MCF 10A (cell line): ENCODE measurements at regions of chr5 and their contacts with region 1.

Region 1: DNA sequence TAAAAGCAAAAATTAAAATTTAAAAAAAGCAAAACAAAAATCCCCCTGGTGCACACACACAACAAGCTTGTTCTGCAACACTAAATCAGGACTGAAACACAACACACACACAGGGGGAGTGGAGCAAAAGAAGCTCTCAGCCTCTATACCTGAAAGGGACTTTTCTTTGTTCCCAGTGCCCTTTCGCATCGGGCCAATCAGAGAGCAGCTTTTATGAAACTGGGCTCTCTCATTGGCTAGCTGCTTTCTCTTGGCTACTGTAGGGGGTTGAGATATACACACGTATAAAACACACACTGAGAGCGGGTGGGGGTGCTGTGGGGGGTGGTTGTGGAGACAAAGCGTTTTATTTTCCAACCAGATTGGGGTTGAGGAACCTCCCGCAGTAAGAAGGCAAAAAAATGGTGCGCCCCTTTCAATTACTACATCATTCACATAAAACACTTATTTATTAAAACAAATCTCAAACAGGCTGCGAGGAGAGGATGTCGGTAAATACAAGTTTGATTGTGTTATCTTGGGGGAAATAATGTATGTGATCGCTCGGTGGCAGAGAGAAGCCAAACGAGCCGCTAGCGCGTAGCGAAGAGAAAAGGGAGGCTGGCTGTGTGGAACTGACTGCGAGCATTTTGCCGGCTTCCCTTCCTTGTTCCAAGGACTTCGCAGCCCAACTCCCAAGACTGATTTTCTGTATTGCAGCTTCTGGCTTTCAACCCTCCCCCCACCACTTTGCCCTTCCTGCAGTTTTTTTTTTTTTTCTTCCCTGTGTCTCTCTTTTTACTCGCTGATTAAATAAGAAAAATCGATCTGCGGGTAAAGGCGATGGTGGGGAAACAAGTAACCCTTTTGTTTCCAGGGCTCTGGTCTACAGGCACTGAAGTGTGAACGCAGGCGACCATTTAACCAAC is 2.5 kb upstream of the ZNF608 start:
- DNase-seq: peak; percentile 97
- H3K4me3 Mint-ChIP-seq: no peak overlapping the region
- H3K27ac Mint-ChIP-seq: no peak overlapping the region
- H3K4me1 Mint-ChIP-seq: peaks cover 12% of the 10 kb centered on the region
- H3K27me3 Mint-ChIP-seq: no peaks in the 10 kb centered on the region
- CTCF ChIP-seq: no peak

Region 2: GRCh38 chr5:124315741-124316415 is 433.1 kb before region 1 on chr5:
- CTCF ChIA-PET with region 1: interaction called, 3 read pairs
- POLR2A ChIA-PET with region 1: no interaction called
- intact Hi-C with region 1: loop called (anchors 10 kb)
- DNase-seq: peak; percentile 83
- H3K4me3 Mint-ChIP-seq: no peak overlapping the region
- H3K27ac Mint-ChIP-seq: no peak overlapping the region
- H3K4me1 Mint-ChIP-seq: peaks cover 7% of the 10 kb centered on the region
- H3K27me3 Mint-ChIP-seq: no peaks in the 10 kb centered on the region
- CTCF ChIP-seq: no peak

Region 3: DNA sequence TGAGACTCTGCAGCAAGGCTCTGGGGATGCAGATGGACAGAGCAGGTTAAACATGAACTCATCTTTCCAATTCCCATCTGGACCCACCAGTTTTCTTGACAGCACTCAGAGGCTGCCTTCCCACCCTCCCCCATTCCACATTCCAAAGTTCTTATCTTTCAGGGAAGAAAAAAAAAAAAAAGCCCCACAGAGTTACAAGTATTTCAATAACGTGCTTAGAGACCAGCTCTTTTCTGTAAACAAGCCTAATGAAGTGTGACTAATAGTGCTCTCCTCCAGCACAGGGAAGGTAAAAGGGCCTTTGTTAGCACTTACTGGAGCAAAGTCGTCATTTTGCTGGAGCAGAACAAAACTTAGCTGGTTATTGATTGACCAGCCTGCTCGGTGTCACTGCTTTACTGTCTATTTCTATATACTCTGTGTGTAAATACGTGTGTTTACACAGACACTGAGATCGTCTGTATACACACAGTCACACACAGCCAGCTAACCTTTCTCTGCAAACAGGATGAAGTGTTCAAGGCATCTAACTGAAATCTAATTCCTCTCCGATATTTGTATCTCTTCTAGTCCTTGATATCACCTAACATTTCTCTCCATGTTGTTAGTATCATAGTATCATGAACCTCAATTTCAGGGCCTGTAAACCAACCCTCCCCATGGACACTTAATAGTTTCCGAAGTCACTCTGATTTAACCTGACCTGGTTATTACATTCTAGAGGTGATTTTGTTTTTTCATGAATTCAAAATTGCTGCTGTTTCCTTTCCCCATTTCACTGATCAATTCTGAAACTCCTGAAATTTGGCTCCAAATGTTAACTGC is 87.4 kb before region 1 on chr5:
- CTCF ChIA-PET with region 1: interaction called, 3 read pairs
- POLR2A ChIA-PET with region 1: interaction called, 16 read pairs
- intact Hi-C with region 1: no loop called
- DNase-seq: peak; percentile 66
- H3K4me3 Mint-ChIP-seq: peak overlapping the region; percentile 47
- H3K27ac Mint-ChIP-seq: peak overlapping the region; percentile 95
- H3K4me1 Mint-ChIP-seq: peaks cover 48% of the 10 kb centered on the region
- H3K27me3 Mint-ChIP-seq: no peaks in the 10 kb centered on the region
- CTCF ChIP-seq: no peak

Region 4: GRCh38 chr5:124677374-124678351 is 71.3 kb before region 1 on chr5:
- CTCF ChIA-PET with region 1: no interaction called
- POLR2A ChIA-PET with region 1: no interaction called
- intact Hi-C with region 1: no loop called
- DNase-seq: no peak
- H3K4me3 Mint-ChIP-seq: no peak overlapping the region
- H3K27ac Mint-ChIP-seq: no peak overlapping the region
- H3K4me1 Mint-ChIP-seq: no peaks in the 10 kb centered on the region
- H3K27me3 Mint-ChIP-seq: no peaks in the 10 kb centered on the region
- CTCF ChIP-seq: no peak

Region 5: GRCh38 chr5:124824637-124825158 is 75.8 kb after region 1 on chr5:
- CTCF ChIA-PET with region 1: interaction called, 3 read pairs
- POLR2A ChIA-PET with region 1: interaction called, 103 read pairs
- intact Hi-C with region 1: no loop called
- DNase-seq: peak; percentile 96
- H3K4me3 Mint-ChIP-seq: peak overlapping the region; percentile 55
- H3K27ac Mint-ChIP-seq: peak overlapping the region; percentile 89
- H3K4me1 Mint-ChIP-seq: peaks cover 33% of the 10 kb centered on the region
- H3K27me3 Mint-ChIP-seq: no peaks in the 10 kb centered on the region
- CTCF ChIP-seq: no peak

Region 6: DNA sequence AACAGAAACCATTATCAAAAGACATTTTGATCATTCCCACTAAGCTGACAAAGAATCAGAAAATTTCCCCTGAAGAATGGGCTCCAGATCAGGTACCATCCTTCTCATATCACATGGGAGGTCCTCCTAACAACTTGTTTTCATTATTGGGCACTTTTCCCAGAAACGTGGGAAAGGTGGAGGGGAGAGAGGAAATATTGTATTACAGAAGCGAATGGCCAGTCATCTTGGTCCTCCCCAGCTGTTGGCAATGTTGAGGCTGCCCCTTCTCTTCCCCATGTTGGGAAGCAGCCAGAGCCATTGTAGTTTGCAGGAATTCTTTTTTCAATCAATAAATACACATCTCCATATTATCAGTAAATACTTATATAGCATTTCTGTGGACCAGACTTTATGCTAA is 123.7 kb after region 1 on chr5:
- CTCF ChIA-PET with region 1: no interaction called
- POLR2A ChIA-PET with region 1: no interaction called
- intact Hi-C with region 1: no loop called
- DNase-seq: peak; percentile 27
- H3K4me3 Mint-ChIP-seq: no peak overlapping the region
- H3K27ac Mint-ChIP-seq: no peak overlapping the region
- H3K4me1 Mint-ChIP-seq: no peaks in the 10 kb centered on the region
- H3K27me3 Mint-ChIP-seq: no peaks in the 10 kb centered on the region
- CTCF ChIP-seq: no peak

Region 7: DNA sequence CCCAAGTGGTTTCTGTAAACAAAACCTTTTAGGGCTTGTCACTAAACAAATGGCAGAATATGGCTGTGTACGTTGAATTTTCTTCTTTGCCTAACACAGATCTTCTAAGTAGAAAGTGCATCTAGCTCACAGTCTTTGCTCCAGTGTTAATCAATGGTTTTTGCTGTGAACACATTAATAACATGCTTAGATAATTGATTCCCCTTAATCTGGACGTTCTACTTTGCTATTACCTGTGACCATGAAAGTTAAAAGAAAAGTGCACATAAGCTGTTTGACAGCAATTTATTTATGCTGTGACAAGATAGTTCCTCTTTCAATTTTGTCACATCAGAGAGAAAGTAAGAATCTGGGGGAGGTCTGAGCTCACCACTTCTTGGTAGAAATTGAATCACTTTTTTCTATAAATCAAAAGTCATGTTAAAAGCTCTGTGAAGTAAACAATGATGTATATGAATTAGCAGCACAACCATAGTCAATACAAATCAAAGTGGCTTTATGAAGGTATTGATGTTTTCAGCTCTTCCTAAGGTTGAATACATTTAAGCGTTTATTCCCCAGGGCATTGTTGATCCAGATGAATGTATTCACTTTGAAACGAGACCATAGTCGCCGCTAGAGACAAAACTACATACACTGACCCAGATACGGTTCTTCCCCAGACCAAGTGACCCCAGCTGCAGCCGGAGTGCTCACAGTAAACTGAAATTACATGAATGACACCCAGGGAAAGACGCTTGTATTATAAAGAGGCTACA is 172.1 kb after region 1 on chr5:
- CTCF ChIA-PET with region 1: no interaction called
- POLR2A ChIA-PET with region 1: no interaction called
- intact Hi-C with region 1: no loop called
- DNase-seq: no peak
- H3K4me3 Mint-ChIP-seq: no peak overlapping the region
- H3K27ac Mint-ChIP-seq: no peak overlapping the region
- H3K4me1 Mint-ChIP-seq: no peaks in the 10 kb centered on the region
- H3K27me3 Mint-ChIP-seq: no peaks in the 10 kb centered on the region
- CTCF ChIP-seq: no peak

Region 8: DNA sequence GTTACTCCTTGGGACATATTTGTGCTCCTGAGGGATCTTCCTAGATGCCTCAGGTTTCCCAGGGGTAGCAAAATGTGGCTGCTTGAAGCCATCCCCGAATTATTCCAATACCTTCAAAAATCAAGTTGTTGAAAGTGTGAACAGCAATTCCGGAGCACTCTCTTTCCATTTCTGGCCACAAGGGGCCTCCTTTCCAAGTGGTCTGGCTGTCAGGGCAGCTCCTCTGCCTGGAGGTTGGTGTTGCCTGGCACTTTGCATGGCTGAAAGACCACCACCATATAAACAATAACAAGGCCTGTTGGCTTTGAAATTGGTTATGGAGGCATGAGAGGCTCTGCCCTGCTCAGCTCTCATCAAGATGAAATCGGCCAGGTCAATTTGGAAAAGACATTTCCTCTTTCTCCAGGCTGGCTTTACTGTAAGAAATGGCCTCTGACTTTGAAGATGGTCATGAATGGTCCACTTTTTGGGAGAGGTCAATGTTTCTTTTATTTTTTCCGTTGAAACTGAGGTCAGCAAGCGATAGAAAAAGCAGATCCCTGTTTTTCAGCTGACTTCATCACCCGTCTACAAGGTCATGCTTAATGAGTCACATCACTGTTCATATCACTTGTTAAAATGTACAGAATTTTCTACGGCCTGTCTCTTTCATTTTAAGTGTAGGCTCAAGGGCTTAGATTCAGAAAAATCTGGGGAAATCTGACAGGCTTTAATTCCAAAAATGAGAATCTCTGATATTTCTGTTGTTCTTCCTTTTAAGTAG is 478.6 kb after region 1 on chr5:
- CTCF ChIA-PET with region 1: no interaction called
- POLR2A ChIA-PET with region 1: no interaction called
- intact Hi-C with region 1: loop called (anchors 5 kb)
- DNase-seq: peak; percentile 66
- H3K4me3 Mint-ChIP-seq: no peak overlapping the region
- H3K27ac Mint-ChIP-seq: no peak overlapping the region
- H3K4me1 Mint-ChIP-seq: peaks cover 12% of the 10 kb centered on the region
- H3K27me3 Mint-ChIP-seq: no peaks in the 10 kb centered on the region
- CTCF ChIP-seq: peak; percentile 73

Region 9: DNA sequence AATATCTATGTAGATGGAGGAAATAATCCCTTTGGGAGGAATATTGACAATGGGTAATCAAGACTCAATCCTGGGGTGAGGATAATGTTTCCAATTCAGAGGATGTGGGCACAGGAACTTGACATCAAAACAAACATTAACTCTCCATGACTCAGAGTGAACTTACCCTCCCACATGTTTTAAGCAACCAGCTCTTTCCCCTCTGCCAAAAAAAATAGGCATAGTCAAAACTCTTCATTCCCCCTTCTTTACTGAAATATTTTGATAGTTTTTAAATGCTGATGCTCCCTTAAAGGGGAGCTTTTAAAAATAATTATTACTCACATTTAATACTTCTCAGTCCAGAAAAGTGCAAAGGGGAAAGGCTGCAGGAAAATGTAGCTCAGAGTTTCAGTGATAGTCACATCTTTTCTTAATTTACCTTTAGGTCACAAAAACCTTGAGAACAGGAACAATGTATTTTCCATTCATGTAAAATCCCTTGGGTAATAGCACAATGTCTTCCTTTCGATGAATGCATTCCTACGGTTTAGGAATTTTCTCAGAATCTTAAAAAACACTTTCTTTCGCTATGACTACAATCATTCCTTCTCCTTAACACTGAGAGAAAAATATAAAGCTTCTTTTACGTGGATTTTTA is 1375.9 kb after region 1 on chr5:
- CTCF ChIA-PET with region 1: no interaction called
- POLR2A ChIA-PET with region 1: interaction called, 3 read pairs
- intact Hi-C with region 1: loop called (anchors 5 kb)
- DNase-seq: peak; percentile 92
- H3K4me3 Mint-ChIP-seq: peak overlapping the region; percentile 30
- H3K27ac Mint-ChIP-seq: peak overlapping the region; percentile 71
- H3K4me1 Mint-ChIP-seq: peaks cover 46% of the 10 kb centered on the region
- H3K27me3 Mint-ChIP-seq: no peaks in the 10 kb centered on the region
- CTCF ChIP-seq: no peak